ENCODE measurements at regions of chr6 and their contacts with region 1.

Region 1: GRCh38 chr6:135535989-135536414 is 38.5 kb upstream of the AHI1 start:
- DNase-seq: no peak
- H3K4me3 Mint-ChIP-seq: no peak overlapping the region
- H3K27ac Mint-ChIP-seq: no peak overlapping the region
- H3K4me1 Mint-ChIP-seq: peaks cover 14% of the 10 kb centered on the region
- H3K27me3 Mint-ChIP-seq: peaks cover 2% of the 10 kb centered on the region

Region 2: DNA sequence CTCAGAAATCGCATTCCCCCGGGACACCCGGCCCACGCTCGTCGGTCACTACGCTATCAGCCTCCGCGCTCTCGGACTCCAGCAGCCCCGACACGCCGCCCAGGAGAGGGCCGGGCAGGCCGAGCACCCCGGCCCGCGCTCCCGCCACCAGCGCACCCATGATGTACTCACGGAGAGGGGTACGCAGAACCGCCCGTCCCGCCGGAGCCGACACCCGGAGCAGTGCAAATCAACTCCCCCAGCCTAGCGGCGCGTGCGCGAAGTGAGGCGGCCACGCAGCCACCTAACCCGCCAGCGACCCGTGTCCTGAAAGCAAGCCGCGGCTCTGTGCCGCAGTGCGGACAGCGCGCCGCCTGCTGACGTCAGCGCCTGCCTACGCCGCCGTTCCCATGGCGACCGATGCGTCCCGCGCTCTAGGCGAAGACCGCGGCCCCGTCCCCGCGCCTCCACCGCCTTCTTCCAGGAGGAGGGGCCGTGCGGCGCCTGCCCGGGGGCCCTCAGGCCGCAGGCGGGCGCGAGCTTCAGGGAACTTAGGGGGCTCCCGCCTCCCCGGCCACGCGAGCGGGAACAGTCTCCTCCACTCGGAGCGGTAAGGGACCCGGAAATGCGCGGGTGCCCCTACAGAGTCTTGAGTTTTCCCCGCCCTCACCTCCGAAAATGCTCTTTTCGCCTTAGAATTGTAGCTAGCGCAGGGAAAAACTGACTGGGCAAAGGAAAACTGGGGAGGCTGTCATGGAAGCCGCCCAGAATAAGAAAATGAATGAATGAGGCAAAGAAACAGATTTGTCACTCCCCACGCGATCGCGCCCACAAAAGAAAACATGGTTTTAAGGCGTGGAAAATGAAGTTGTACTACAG is 38.4 kb before region 1 on chr6 and contains the start of gene AHI1:
- CTCF ChIA-PET with region 1: interaction called, 4 read pairs
- POLR2A ChIA-PET with region 1: interaction called, 5 read pairs
- intact Hi-C with region 1: loop called (anchors 1 kb)
- DNase-seq: peak; percentile 90
- H3K4me3 Mint-ChIP-seq: peak within 1 kb of the TSS; percentile 9
- H3K27ac Mint-ChIP-seq: no peak within 1 kb of the TSS
- H3K4me1 Mint-ChIP-seq: peaks cover 10% of the 10 kb centered on the region
- H3K27me3 Mint-ChIP-seq: no peaks in the 10 kb centered on the region
- total RNA-seq, gene AHI1: 18.6 to 22.7 TPM

Region 3: DNA sequence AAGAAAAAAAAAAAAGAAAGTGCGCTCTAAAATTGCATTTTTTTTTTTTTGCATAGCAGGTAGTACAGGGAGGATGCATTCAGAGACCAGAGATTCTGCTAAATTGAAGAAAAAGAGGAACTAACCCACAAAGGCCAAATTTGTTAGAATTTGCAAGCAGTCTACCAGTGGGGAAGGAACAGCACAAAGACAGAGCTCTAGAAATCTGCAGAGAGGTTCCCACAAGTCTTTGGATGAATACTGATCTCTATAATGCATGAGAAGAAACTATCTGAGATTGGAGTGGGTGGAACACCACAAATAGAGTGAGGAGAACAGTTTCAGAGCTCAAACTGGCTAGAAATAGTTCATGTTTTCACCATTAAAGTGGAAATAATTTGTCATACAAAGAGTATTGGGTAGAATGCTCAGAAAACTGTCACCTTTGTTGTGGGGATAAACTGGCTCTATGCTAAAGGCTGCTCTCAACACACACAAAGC is 41.1 kb after region 1 on chr6:
- CTCF ChIA-PET with region 1: interaction called, 4 read pairs
- POLR2A ChIA-PET with region 1: interaction called, 4 read pairs
- intact Hi-C with region 1: loop called (anchors 1 kb)
- DNase-seq: no peak
- H3K4me3 Mint-ChIP-seq: no peak overlapping the region
- H3K27ac Mint-ChIP-seq: peak overlapping the region; percentile 42
- H3K4me1 Mint-ChIP-seq: peaks cover 19% of the 10 kb centered on the region
- H3K27me3 Mint-ChIP-seq: no peaks in the 10 kb centered on the region

Region 4: DNA sequence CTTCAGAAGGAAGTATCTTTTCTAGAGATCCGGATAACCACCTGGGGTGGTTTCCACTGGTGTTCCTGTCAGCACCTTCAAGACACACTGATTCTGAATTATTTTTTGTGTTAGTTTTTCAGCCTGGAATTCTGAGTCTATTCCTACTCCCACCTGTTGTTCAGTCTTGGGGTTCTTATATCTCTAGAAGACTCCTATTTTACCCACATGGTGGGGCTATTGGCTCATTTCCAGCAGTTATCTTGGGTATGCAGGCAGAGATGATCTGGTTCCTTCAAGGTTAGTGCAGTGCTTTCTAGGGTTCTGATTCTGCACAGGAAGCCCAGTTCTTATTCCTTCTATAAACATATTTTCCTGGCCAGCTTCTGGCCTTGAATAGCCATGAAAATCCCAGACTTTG is 139.9 kb after region 1 on chr6:
- CTCF ChIA-PET with region 1: interaction called, 9 read pairs
- POLR2A ChIA-PET with region 1: no interaction called
- intact Hi-C with region 1: loop called (anchors 5 kb)
- DNase-seq: peak; percentile 13
- H3K4me3 Mint-ChIP-seq: no peak overlapping the region
- H3K27ac Mint-ChIP-seq: no peak overlapping the region
- H3K4me1 Mint-ChIP-seq: no peaks in the 10 kb centered on the region
- H3K27me3 Mint-ChIP-seq: no peaks in the 10 kb centered on the region

Region 5: GRCh38 chr6:135909737-135910387 is 373.9 kb after region 1 on chr6:
- CTCF ChIA-PET with region 1: interaction called, 57 read pairs
- POLR2A ChIA-PET with region 1: no interaction called
- intact Hi-C with region 1: loop called (anchors 2 kb)
- DNase-seq: peak; percentile 60
- H3K4me3 Mint-ChIP-seq: no peak overlapping the region
- H3K27ac Mint-ChIP-seq: no peak overlapping the region
- H3K4me1 Mint-ChIP-seq: peaks cover 2% of the 10 kb centered on the region
- H3K27me3 Mint-ChIP-seq: no peaks in the 10 kb centered on the region

Region 6: GRCh38 chr6:135974426-135974825 is 438.4 kb after region 1 on chr6:
- CTCF ChIA-PET with region 1: no interaction called
- POLR2A ChIA-PET with region 1: no interaction called
- intact Hi-C with region 1: no loop called
- DNase-seq: no peak
- H3K4me3 Mint-ChIP-seq: no peak overlapping the region
- H3K27ac Mint-ChIP-seq: no peak overlapping the region
- H3K4me1 Mint-ChIP-seq: no peaks in the 10 kb centered on the region
- H3K27me3 Mint-ChIP-seq: peaks cover 3% of the 10 kb centered on the region